ENCODE measurements at regions of chr1 and their contacts with region 1.

Region 1: GRCh38 chr1:232393010-232393409 is 236.9 kb downstream of the SIPA1L2 start:
- DNase-seq: no peak
- H3K4me3 ChIP-seq: no peak overlapping the region
- H3K27ac ChIP-seq: no peak overlapping the region
- H3K4me1 ChIP-seq: no peaks in the 10 kb centered on the region
- H3K27me3 ChIP-seq: no peaks in the 10 kb centered on the region
- CTCF ChIP-seq: no peak
- POLR2A ChIP-seq: no peak

Region 2: DNA sequence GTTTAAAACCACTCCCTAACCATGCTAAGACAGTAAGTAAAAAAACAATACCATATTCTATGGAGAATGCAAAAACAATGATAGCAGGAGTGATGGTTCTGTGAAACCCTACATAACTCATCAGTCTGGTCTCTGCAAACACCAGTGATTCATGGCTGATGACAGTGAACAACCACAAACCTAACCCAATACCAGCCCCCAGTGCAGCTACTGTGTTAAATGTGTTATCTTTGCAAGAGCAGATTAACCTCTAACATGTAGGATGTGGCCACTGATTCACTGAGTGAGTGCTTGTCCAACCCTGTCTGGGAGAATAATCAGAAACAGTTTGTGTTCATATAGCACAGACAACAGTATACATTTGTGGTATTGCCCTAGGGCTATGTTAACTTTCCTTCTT is 1851.0 kb before region 1 on chr1:
- intact Hi-C with region 1: no loop called
- DNase-seq: no peak
- H3K4me3 ChIP-seq: no peak overlapping the region
- H3K27ac ChIP-seq: no peak overlapping the region
- H3K4me1 ChIP-seq: no peaks in the 10 kb centered on the region
- H3K27me3 ChIP-seq: no peaks in the 10 kb centered on the region
- CTCF ChIP-seq: no peak
- POLR2A ChIP-seq: no peak

Region 3: DNA sequence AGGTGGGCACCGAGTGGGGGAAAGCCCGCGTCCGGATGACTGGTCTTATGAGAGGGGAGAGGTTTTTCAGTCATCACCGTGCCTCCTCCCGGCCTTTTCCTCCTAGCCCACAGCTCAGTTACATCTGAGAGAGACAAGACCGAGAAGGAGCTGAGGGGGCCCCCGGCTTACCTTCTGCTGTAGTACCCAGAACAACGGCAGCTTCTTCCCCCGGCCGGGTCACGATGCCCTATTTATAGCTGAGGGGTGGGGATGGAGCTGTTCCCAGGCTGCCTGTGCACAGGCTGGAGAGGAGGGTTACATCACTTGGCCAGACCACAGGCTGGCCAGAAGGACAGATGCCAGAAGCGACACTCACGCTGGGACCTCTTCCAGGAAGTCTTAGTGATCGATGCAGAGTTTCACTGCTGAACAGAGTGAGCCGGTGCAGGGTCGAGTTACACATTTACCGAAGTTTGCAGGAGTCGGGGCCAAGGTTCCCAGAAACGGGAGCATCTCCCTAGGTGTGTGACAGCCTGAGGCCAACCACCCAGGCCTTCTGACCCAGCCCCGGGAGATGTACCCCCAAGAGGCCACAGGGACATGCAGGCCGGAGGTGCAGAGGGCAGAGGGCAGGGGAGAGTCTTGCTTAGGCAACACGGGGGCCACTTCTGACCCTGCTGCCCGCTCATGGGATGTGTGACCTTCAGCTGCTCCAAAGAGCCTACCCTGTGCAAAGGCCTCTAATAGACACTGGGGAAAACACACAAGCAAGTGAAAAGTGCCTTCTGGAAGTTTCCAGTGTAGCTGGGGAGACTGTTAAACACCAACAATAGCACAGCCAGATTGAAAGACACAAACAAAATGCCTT is 1678.9 kb before region 1 on chr1 and contains the start of gene AGT:
- intact Hi-C with region 1: loop called (anchors 10 kb)
- DNase-seq: peak in 1 of 2 donors; percentile 32
- H3K4me3 ChIP-seq: peak within 1 kb of the TSS in 2 of 3 donors; percentile 29 to 40
- H3K27ac ChIP-seq: peak within 1 kb of the TSS in 1 of 2 donors; percentile 33
- H3K4me1 ChIP-seq: peaks cover 0 to 7% of the 10 kb centered on the region in 2 donors
- H3K27me3 ChIP-seq: no peaks in the 10 kb centered on the region
- CTCF ChIP-seq: no peak
- POLR2A ChIP-seq: no peak
- total RNA-seq, gene AGT: 0.59 to 9.1 (median 8.2) TPM